Panc1 (cell line): ENCODE measurements at regions of chr14 and their contacts with region 1.

Region 1: DNA sequence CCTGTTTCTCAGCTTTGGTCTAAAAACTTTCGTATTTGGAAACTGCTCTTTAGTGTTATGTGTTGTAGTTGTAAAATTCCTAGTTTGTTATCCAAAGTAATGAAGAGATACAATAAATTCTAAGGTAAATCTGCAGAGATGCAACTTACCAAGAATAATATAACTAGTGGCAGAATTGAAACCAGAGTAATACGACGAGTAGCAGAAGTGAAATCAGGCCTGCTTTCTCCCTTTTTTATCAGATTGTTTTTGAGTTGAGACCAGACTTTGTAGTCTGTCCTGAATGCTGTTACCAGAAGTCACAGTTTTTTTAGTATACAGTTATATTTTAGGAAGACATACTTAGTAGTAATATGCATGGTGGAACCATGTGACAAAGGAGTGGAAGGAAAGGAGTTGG is 12.5 kb downstream of the PAPOLA start:
- DNase-seq: no peak
- ATAC-seq: no peak
- H3K4me3 ChIP-seq: no peak overlapping the region
- H3K27ac ChIP-seq: no peak overlapping the region
- H3K4me1 ChIP-seq: peaks cover 21% of the 10 kb centered on the region; the same call in 1 of the 2 replicates
- H3K27me3 ChIP-seq: no peaks in the 10 kb centered on the region
- CTCF ChIP-seq: no peak

Region 2: GRCh38 chr14:96576937-96577336 is 62.2 kb after region 1 on chr14:
- CTCF ChIA-PET with region 1: no interaction called
- POLR2A ChIA-PET with region 1: interaction called, 10 read pairs
- in situ Hi-C with region 1: no loop called
- intact Hi-C with region 1: no loop called
- DNase-seq: no peak
- ATAC-seq: no peak
- H3K4me3 ChIP-seq: no peak overlapping the region
- H3K27ac ChIP-seq: no peak overlapping the region
- H3K4me1 ChIP-seq: no peaks in the 10 kb centered on the region
- H3K27me3 ChIP-seq: no peaks in the 10 kb centered on the region
- CTCF ChIP-seq: no peak